ENCODE measurements at regions of chr9 and their contacts with region 1.

Region 1: GRCh38 chr9:135085830-135086546 is 1.5 kb upstream of the OLFM1 start:
- DNase-seq: peak in 1 of 2 donors; percentile 81
- H3K4me3 ChIP-seq: peak overlapping the region; percentile 27 to 60
- H3K27ac ChIP-seq: no peak overlapping the region
- H3K4me1 ChIP-seq: peaks cover 3 to 12% of the 10 kb centered on the region in 2 donors
- H3K27me3 ChIP-seq: peaks cover 8% of the 10 kb centered on the region
- CTCF ChIP-seq: peak; percentile 76 to 86 (median 85)

Region 2: DNA sequence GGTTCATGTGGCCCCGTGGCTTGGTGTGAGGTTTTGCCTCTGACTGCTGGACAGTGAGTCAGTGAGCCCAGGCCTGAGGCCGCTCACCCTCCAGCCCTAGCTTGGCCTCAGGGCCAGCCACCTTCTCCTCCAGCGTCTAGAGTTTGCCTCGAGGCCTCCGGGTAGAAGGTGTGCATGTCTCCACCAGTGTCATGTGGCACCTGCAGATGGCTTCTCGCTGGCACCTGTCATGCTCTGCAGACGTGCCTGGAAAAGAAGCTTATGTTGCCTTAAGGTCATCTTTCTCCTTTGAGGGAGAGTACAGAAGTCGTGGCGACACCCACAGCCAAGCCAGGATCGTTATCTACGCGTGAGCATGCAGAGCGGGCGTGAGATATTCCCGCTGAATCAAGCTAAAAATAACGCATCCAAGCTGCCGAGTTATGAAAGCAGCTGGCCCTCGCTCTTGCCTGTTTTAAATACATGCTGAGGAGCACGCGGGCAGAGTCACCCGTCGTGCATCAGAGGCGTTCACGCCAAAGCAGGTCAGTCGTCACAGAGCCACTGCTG is 285.1 kb before region 1 on chr9:
- intact Hi-C with region 1: no loop called
- DNase-seq: peak in 1 of 2 donors; percentile 72
- H3K4me3 ChIP-seq: no peak overlapping the region
- H3K27ac ChIP-seq: peak overlapping the region in 1 of 2 donors; percentile 39
- H3K4me1 ChIP-seq: no peaks in the 10 kb centered on the region
- H3K27me3 ChIP-seq: no peaks in the 10 kb centered on the region
- CTCF ChIP-seq: no peak

Region 3: DNA sequence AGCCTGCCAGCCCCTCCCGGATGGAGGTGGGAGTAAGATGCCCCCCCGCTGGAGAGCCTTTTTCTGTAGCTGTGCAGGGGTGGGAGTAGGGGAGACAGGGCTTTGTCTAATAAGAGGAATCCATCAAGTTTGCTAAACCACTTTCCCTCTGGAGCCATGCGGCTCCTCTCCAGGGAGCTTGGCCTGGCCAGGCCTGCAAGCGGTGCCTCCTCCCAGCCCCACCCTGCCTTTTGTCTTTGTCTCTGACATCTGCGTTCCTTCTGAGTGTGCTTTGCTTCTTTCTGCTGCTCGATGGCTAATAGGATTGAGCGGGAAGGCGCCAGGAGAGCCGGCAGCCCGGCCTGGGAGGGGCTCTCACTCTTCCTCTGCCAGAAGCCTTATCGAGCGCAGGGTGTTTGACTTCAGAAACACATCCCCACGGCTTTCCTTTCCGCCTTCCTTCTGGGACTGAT is 141.6 kb before region 1 on chr9:
- intact Hi-C with region 1: no loop called
- DNase-seq: no peak
- H3K4me3 ChIP-seq: no peak overlapping the region
- H3K27ac ChIP-seq: no peak overlapping the region
- H3K4me1 ChIP-seq: no peaks in the 10 kb centered on the region
- H3K27me3 ChIP-seq: peaks cover 3% of the 10 kb centered on the region
- CTCF ChIP-seq: no peak

Region 4: DNA sequence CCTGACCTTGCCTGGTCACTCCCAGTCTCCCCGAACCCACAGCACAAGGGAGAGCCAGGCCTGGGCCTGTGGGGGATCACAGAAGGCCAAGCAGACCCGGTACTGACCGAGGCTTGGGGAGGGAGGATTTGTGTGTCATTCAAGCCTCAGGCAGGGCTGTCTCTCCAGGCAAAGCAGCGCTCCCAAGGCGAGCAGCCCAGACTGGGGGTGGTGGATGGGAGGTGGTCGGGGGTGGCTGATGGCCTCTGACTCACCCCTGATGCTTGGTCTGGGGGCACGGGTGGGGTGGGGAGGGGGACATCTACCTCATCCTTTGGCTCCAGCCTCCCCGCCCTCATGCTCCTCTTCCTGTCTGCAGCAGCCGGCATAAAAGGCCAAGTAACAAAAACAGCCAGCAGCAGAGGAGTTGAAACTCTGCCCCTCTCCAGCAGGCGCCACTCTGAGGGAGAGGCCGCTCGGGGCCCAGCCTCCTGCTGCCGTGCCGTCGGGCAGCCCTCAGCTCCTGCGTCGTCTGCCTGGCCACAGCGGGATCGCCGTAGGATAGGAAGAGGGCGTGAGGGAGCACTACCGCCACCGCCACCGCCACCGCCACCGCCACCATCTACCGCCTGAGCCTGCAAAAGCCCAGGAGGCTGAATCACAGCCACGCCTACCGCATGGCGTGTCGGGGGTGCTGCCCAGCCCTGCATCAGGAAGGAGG is 167.5 kb after region 1 on chr9:
- intact Hi-C with region 1: no loop called
- DNase-seq: no peak
- H3K4me3 ChIP-seq: no peak overlapping the region
- H3K27ac ChIP-seq: no peak overlapping the region
- H3K4me1 ChIP-seq: no peaks in the 10 kb centered on the region
- H3K27me3 ChIP-seq: no peaks in the 10 kb centered on the region
- CTCF ChIP-seq: no peak

Region 5: DNA sequence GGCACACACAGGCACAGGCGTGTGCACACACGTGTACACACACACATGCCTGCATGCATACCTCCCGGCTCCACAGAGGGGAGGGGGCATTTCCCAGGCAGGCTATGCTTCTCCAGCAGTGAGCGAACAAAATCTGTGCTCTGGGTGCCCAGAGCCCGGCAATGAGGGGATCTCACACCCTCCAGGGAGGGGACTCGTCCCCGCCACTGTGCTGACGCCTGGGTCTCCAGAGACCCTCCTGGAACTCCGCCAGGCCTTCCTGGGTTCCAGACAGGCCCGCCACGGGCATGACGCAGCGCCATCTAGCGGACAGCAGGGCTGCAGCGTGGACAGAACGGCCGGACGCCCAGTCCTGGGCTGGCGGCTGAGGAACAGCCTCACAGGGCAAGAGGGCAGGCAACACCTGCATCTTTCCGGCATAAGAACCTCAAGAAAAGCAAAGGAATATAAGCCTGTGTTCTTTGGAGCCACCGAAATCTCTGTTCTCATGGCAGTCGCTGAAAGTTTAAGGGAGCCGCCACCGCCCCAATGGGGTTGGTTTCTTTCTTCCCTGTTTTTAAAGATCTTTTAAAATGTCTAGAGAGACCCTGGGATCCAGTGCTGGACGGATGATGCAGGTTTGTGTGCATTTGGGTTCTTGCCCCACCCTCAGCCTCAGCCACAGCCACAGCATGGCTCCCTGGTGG is 258.0 kb after region 1 on chr9:
- intact Hi-C with region 1: loop called (anchors 2 kb)
- DNase-seq: no peak
- H3K4me3 ChIP-seq: no peak overlapping the region
- H3K27ac ChIP-seq: no peak overlapping the region
- H3K4me1 ChIP-seq: no peaks in the 10 kb centered on the region
- H3K27me3 ChIP-seq: no peaks in the 10 kb centered on the region
- CTCF ChIP-seq: peak; percentile 26 to 66 (median 51)

Region 6: GRCh38 chr9:135410831-135411473 is 325.0 kb after region 1 on chr9:
- intact Hi-C with region 1: loop called (anchors 1 kb)
- DNase-seq: no peak
- H3K4me3 ChIP-seq: no peak overlapping the region
- H3K27ac ChIP-seq: no peak overlapping the region
- H3K4me1 ChIP-seq: no peaks in the 10 kb centered on the region
- H3K27me3 ChIP-seq: no peaks in the 10 kb centered on the region
- CTCF ChIP-seq: no peak

Measured in ascending aorta (tissue), 2 donors.